ENCODE measurements at regions of chr13 and their contacts with region 1.

Region 1: GRCh38 chr13:39037880-39038568 is at the starts of genes NHLRC3 and PROSER1:
- DNase-seq: peak; percentile 81
- H3K4me3 Mint-ChIP-seq: peak within 1 kb of the TSS; percentile 87
- H3K27ac Mint-ChIP-seq: peak within 1 kb of the TSS; percentile 93
- H3K4me1 Mint-ChIP-seq: peaks cover 52% of the 10 kb centered on the region
- H3K27me3 Mint-ChIP-seq: no peaks in the 10 kb centered on the region
- total RNA-seq, gene NHLRC3: 25.5 to 25.9 TPM
- total RNA-seq, gene PROSER1: 53.2 to 60.7 TPM

Region 2: GRCh38 chr13:39016787-39017186 is 21.2 kb before region 1 on chr13:
- CTCF ChIA-PET with region 1: interaction called, 18 read pairs
- POLR2A ChIA-PET with region 1: interaction called, 28 read pairs
- DNase-seq: peak; percentile 34
- H3K4me3 Mint-ChIP-seq: no peak overlapping the region
- H3K27ac Mint-ChIP-seq: no peak overlapping the region
- H3K4me1 Mint-ChIP-seq: peaks cover 17% of the 10 kb centered on the region
- H3K27me3 Mint-ChIP-seq: no peaks in the 10 kb centered on the region

Region 3: GRCh38 chr13:39023790-39024189 is 14.2 kb before region 1 on chr13:
- CTCF ChIA-PET with region 1: interaction called, 18 read pairs
- POLR2A ChIA-PET with region 1: interaction called, 28 read pairs
- DNase-seq: no peak
- H3K4me3 Mint-ChIP-seq: no peak overlapping the region
- H3K27ac Mint-ChIP-seq: no peak overlapping the region
- H3K4me1 Mint-ChIP-seq: peaks cover 2% of the 10 kb centered on the region
- H3K27me3 Mint-ChIP-seq: no peaks in the 10 kb centered on the region

Region 4: DNA sequence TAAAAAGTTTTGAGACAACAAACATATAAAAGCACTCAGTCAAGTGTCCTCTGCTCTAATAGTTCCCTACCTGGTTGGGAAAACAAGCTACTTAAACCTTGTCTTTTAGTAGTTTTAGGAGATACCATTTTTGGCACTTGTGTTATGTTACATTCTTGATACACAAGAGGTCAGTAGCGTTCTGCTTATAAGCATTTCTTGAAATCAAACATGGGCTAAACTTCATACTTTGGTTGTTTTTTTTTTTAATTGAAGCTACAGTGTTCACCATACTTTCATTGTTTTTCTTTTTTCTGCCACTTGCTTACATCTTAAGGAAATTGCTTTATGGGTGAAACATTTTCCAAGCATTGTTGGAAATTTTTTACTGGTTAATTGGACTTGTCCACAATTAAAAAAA is 13.1 kb after region 1 on chr13:
- CTCF ChIA-PET with region 1: interaction called, 3 read pairs
- POLR2A ChIA-PET with region 1: interaction called, 12 read pairs
- DNase-seq: no peak
- H3K4me3 Mint-ChIP-seq: no peak overlapping the region
- H3K27ac Mint-ChIP-seq: no peak overlapping the region
- H3K4me1 Mint-ChIP-seq: no peaks in the 10 kb centered on the region
- H3K27me3 Mint-ChIP-seq: no peaks in the 10 kb centered on the region

Measured in activated CD4-positive, alpha-beta memory T cell treated with anti-CD3 and anti-CD28 coated beads, Interleukin-2, amount 10 ng/mL, durations not matched to agents 7 days and 5 days (primary cell).